IMR-90 (cell line): ENCODE measurements at regions of chr5 and their contacts with region 1.

Region 1: DNA sequence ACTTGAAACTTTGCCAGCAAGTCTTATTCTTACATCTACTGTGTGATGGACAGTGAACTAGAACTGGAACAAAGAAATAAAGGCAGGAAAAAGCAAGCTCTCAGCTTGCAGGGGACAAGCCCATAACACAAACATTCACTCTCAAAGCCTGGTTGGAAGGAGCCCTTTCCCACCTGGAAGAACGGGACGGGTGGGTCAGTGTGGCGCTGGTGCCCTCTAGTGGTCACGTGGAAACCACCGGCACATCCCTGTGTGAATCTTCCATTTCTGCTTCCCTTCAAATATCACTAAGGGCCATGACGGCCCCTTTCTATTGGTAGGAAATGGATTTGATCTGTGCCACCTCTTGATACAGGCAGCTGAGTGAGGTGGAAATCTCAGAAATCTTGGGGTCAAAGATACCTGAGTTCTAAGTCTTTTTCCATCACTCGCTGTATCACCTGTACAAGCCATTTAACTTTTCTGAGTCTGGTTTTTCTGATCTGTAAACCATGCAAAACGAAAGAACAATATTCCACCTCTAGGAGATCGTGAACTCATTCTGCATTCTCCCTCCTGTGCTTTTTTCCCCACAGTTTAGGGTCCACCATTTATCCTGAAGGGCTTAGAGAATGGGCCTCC is 211.6 kb downstream of the MSX2 start:
- DNase-seq: peak; percentile 30
- ATAC-seq: peak; percentile 84
- H3K4me3 ChIP-seq: no peak overlapping the region
- H3K27ac ChIP-seq: no peak overlapping the region
- H3K4me1 ChIP-seq: no peaks in the 10 kb centered on the region
- H3K27me3 ChIP-seq: no peaks in the 10 kb centered on the region
- CTCF ChIP-seq: peak; percentile 82
- POLR2A ChIP-seq: no peak
- RAD21 ChIP-seq: peak; percentile 80

Region 2: GRCh38 chr5:174327317-174328236 is 608.4 kb before region 1 on chr5:
- CTCF ChIA-PET with region 1: no interaction called
- POLR2A ChIA-PET with region 1: no interaction called
- dilution Hi-C with region 1: no loop called
- in situ Hi-C with region 1: loop called (anchors 10 kb)
- intact Hi-C with region 1: loop called (anchors 1 kb)
- DNase-seq: peak; percentile 69
- ATAC-seq: peak; percentile 85
- H3K4me3 ChIP-seq: no peak overlapping the region
- H3K27ac ChIP-seq: peak overlapping the region; percentile 10; the same call in 1 of the 2 replicates
- H3K4me1 ChIP-seq: peaks cover 4% of the 10 kb centered on the region; the same call in 1 of the 2 replicates
- H3K27me3 ChIP-seq: no peaks in the 10 kb centered on the region; the same call in 1 of the 2 replicates
- CTCF ChIP-seq: peak; percentile 82
- POLR2A ChIP-seq: no peak
- RAD21 ChIP-seq: peak; percentile 73

Region 3: DNA sequence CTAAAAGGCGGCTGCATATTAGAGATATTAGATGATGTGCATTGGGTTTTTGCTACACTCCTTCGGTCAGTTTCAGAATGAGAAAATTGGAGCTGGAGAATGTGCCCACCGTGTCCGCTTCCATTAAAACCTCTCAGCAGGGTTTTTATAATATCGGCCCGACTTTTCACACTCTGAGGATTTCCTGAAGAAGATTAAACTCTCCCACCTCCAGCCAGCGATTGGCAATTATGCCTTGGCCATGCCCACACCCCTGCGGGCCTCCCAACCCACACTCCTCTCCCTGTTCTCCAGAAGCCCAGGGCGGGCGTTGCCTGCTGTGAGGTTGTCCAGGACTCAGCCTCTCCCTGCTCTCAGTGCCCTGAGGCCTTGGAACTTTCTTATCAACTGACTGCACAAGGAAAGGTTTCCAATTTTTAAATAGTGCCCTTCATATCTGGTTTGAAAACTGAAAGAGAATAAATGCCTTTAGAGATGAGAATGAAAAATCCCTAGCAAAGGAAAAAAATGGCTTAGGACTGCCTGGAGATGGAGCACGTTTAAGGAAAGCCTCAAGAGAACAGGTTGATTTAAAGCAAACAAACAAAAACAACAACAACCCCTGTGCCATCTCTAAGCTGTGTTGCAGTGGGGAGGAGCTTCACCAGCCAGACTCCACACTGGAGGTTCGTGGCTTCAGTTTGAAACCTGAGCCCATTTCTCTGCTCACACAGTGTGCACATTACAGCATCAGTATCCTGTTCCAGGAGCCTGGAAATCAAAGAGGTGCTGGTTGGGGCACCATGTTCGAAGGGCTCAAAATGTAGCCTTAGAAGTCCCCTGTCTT is 597.6 kb before region 1 on chr5:
- CTCF ChIA-PET with region 1: no interaction called
- POLR2A ChIA-PET with region 1: no interaction called
- dilution Hi-C with region 1: no loop called
- in situ Hi-C with region 1: loop called (anchors 10 kb)
- intact Hi-C with region 1: no loop called
- DNase-seq: no peak
- ATAC-seq: no peak
- H3K4me3 ChIP-seq: no peak overlapping the region
- H3K27ac ChIP-seq: no peak overlapping the region
- H3K4me1 ChIP-seq: no peaks in the 10 kb centered on the region
- H3K27me3 ChIP-seq: peaks cover 17% of the 10 kb centered on the region
- CTCF ChIP-seq: no peak
- POLR2A ChIP-seq: no peak
- RAD21 ChIP-seq: no peak

Region 4: GRCh38 chr5:174409070-174409469 is 526.9 kb before region 1 on chr5:
- CTCF ChIA-PET with region 1: no interaction called
- POLR2A ChIA-PET with region 1: no interaction called
- dilution Hi-C with region 1: no loop called
- in situ Hi-C with region 1: no loop called
- intact Hi-C with region 1: no loop called
- DNase-seq: no peak
- ATAC-seq: no peak
- H3K4me3 ChIP-seq: no peak overlapping the region
- H3K27ac ChIP-seq: no peak overlapping the region
- H3K4me1 ChIP-seq: peaks cover 2% of the 10 kb centered on the region; the same call in 1 of the 2 replicates
- H3K27me3 ChIP-seq: peaks cover 9% of the 10 kb centered on the region
- CTCF ChIP-seq: 0 out of 2 replicates have a peak, but pooled peaks have one; percentile 4
- POLR2A ChIP-seq: no peak
- RAD21 ChIP-seq: no peak

Region 5: DNA sequence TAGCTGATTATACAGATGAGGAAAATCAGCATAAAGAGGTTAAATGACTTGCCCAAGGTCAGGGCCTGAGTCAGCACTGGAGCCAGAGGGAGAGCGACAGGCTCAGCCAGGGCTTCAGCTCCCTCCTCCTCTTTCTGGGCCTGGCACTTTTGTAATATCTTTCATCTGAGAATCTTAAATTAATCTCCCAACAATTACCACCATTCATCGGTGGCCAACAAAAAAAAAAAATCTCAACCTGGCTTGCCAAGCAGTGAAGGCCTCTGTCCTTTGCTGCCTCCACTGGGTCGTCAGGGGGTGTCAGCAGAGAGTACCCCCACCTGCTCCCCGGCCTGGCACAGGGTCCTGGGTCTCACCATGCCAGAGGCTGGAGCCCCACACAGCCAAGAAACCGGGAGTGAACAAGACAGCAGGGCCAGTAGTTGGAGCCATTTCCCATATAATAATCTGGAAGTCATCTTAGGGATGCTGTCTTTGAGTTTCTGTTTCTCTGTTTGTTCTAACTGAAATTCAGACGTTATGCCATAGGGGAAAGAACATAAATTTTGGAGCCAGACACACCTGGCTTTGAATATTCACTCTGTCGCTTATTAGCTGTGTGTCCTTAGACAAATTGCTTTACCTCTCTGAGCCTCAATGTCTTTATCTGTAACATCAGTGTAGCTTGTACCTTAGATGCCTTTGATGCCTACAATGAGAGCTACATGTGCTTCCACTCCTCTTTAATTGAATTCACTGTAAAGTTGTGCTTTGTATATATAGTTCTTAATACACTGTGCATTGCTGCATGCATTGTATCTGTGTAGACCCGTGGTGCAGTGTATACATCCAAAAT is 511.5 kb before region 1 on chr5:
- CTCF ChIA-PET with region 1: interaction called, 3 read pairs
- POLR2A ChIA-PET with region 1: no interaction called
- dilution Hi-C with region 1: no loop called
- in situ Hi-C with region 1: loop called (anchors 5 kb)
- intact Hi-C with region 1: loop called (anchors 1 kb)
- DNase-seq: no peak
- ATAC-seq: no peak; the same call in 1 of the 2 replicates
- H3K4me3 ChIP-seq: no peak overlapping the region
- H3K27ac ChIP-seq: no peak overlapping the region
- H3K4me1 ChIP-seq: peaks cover 1% of the 10 kb centered on the region; the same call in 1 of the 2 replicates
- H3K27me3 ChIP-seq: no peaks in the 10 kb centered on the region; the same call in 1 of the 2 replicates
- CTCF ChIP-seq: peak; percentile 39
- POLR2A ChIP-seq: no peak
- RAD21 ChIP-seq: peak; percentile 32; the same call in 1 of the 2 replicates

Region 6: GRCh38 chr5:174910245-174910737 is 25.7 kb before region 1 on chr5:
- CTCF ChIA-PET with region 1: no interaction called
- POLR2A ChIA-PET with region 1: no interaction called
- dilution Hi-C with region 1: no loop called
- in situ Hi-C with region 1: no loop called
- intact Hi-C with region 1: loop called (anchors 1 kb)
- DNase-seq: peak; percentile 18
- ATAC-seq: peak; percentile 100
- H3K4me3 ChIP-seq: no peak overlapping the region
- H3K27ac ChIP-seq: no peak overlapping the region
- H3K4me1 ChIP-seq: no peaks in the 10 kb centered on the region
- H3K27me3 ChIP-seq: no peaks in the 10 kb centered on the region
- CTCF ChIP-seq: peak; percentile 69
- POLR2A ChIP-seq: no peak
- RAD21 ChIP-seq: peak; percentile 64